Activated CD8-positive, alpha-beta memory T cell treated with anti-CD3 and anti-CD28 coated beads, Interleukin-2, amount 10 ng/mL, durations not matched to agents 7 days and 5 days (primary cell): ENCODE measurements at regions of chr13 and their contacts with region 1.

Region 1: DNA sequence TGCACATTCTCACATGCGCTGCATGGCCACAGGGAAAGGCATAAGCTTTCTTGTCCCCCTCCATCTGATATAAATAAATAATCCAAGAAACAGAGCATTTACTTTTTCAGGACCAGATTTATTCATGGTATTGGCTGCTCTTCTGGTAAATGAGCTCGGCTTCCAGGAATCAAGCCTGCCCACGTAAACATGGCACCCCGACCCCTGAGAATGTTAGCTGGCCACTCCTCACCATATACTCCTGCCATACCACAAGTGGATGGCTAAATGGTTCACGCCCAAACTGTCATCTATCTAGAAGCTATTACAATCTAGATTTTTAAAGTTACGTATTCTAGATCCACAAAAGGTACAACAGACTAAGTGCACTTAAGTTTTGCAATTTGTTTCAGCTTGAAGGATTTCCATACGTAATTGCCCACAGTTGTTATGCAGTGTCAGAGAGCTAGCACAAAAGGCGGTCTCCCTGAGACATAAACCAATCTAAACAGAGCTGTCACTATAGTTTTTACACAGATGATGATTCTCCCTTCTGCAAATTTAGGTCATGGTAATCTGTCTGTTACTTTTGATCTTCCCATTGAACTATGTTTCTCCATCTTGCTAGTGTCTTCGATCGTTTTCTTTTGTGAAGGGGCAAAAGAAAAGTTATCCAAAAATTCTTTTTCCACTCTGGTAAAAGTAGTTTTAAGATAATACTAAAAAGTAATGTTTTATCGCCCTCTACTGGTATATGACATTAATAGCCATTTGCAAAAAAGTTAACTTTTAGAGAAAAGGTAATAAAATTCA is 16.2 kb upstream of the FOXO1 start:
- DNase-seq: no peak
- ATAC-seq: no peak
- H3K4me3 Mint-ChIP-seq: no peak overlapping the region
- H3K27ac Mint-ChIP-seq: no peak overlapping the region
- H3K4me1 Mint-ChIP-seq: peaks cover 4% of the 10 kb centered on the region
- H3K27me3 Mint-ChIP-seq: no peaks in the 10 kb centered on the region

Region 2: GRCh38 chr13:39682788-39683187 is 999.9 kb before region 1 on chr13:
- CTCF ChIA-PET with region 1: interaction called, 13 read pairs
- DNase-seq: no peak
- ATAC-seq: peak; percentile 63
- H3K4me3 Mint-ChIP-seq: no peak overlapping the region
- H3K27ac Mint-ChIP-seq: no peak overlapping the region
- H3K4me1 Mint-ChIP-seq: peaks cover 10% of the 10 kb centered on the region
- H3K27me3 Mint-ChIP-seq: no peaks in the 10 kb centered on the region

Region 3: GRCh38 chr13:39942552-39943273 is 739.9 kb before region 1 on chr13:
- CTCF ChIA-PET with region 1: interaction called, 55 read pairs
- DNase-seq: peak; percentile 76
- ATAC-seq: peak; percentile 99
- H3K4me3 Mint-ChIP-seq: no peak overlapping the region
- H3K27ac Mint-ChIP-seq: no peak overlapping the region
- H3K4me1 Mint-ChIP-seq: peaks cover 2% of the 10 kb centered on the region
- H3K27me3 Mint-ChIP-seq: no peaks in the 10 kb centered on the region

Region 4: GRCh38 chr13:40069173-40070044 is 613.2 kb before region 1 on chr13:
- CTCF ChIA-PET with region 1: interaction called, 40 read pairs
- DNase-seq: peak; percentile 76
- ATAC-seq: peak; percentile 87
- H3K4me3 Mint-ChIP-seq: no peak overlapping the region
- H3K27ac Mint-ChIP-seq: no peak overlapping the region
- H3K4me1 Mint-ChIP-seq: peaks cover 12% of the 10 kb centered on the region
- H3K27me3 Mint-ChIP-seq: no peaks in the 10 kb centered on the region

Region 5: DNA sequence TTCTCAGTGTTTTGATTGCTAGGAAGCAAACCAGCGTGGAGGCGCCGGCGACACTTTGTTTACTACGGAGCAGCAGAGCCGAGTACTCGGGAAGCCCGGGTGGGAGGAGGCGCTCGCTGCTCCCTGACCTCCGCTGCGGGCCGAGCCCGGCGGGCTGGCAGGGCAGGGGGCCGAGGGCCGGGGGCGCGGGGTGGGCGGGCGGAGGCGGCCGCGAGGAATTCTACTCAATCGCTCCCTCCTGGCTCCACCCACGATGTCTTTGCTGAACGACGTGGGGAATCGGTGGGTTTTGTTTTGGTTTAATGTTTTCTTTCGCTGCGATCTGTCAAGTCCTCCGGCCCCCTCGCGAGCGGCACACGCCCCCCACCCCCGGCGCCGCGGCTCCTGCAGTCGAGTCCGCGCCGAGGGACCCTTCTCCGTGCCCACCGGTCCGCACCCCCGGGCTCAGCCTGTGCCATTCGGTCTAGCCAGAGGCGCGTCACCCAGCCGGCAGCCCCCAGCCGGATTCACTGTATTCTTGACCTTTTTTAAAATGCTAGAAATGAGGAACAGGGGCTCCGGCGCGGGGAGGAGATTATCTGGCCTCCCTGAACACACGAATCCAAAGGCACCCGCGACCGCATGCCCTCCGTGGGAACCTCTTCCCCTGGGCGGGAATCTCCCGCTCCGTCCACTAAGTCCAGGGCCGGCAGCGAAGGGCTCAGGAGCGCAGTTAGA is 15.6 kb before region 1 on chr13:
- CTCF ChIA-PET with region 1: interaction called, 31 read pairs
- DNase-seq: peak; percentile 59
- ATAC-seq: peak; percentile 22
- H3K4me3 Mint-ChIP-seq: peak overlapping the region; percentile 84
- H3K27ac Mint-ChIP-seq: peak overlapping the region; percentile 84
- H3K4me1 Mint-ChIP-seq: peaks cover 24% of the 10 kb centered on the region
- H3K27me3 Mint-ChIP-seq: no peaks in the 10 kb centered on the region